ENCODE measurements at regions of chr14 and their contacts with region 1.

Region 1: GRCh38 chr14:102694530-102695166 is 82.6 kb upstream of the TRAF3 start:
- DNase-seq: peak; percentile 78
- H3K4me3 ChIP-seq: no peak overlapping the region
- H3K27ac ChIP-seq: no peak overlapping the region
- H3K4me1 ChIP-seq: peaks cover 4% of the 10 kb centered on the region
- CTCF ChIP-seq: peak; percentile 87

Region 2: DNA sequence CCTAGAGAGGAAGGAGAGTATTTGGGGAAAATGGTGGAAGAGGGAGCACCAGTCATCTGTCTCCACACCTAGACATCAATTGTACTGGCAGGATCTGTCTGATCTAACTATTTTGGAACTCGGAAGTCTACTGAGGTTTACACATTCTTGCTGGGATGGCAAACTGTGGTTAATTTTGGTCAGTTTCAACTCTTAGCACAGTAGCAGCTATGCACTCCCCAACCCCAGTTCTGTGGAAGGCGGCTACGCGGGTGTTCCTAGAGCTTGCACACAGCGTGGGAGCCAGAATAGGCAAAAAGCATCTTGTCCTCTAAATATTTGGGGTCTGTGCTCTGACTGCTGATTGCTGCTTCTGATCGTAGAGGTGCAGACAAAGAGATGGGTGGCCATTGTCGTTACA is 298.1 kb before region 1 on chr14:
- CTCF ChIA-PET with region 1: no interaction called
- POLR2A ChIA-PET with region 1: no interaction called
- intact Hi-C with region 1: no loop called
- DNase-seq: no peak
- H3K4me3 ChIP-seq: no peak overlapping the region
- H3K27ac ChIP-seq: no peak overlapping the region
- H3K4me1 ChIP-seq: no peaks in the 10 kb centered on the region
- CTCF ChIP-seq: no peak

Region 3: DNA sequence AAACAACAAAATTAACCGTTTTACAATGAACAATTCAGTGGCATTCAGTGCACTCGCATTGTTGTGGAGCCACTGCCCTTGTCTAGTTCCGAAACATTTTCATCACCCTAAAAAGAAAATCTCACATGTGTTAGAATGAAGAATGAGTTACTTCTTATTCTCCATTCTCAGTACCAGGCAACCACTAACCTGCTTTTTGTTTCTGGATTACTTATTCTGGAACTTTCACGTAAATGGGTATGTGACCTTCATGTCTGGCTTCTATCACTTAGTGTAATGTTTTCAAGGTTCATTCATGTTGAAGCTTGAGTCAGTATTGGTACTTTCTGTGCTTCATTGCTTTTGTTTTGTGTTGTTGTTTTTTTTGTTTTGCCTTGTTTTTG is 86.6 kb before region 1 on chr14:
- CTCF ChIA-PET with region 1: no interaction called
- POLR2A ChIA-PET with region 1: no interaction called
- intact Hi-C with region 1: no loop called
- DNase-seq: no peak
- H3K4me3 ChIP-seq: peak overlapping the region; percentile 6
- H3K27ac ChIP-seq: peak overlapping the region; percentile 33
- H3K4me1 ChIP-seq: peaks cover 71% of the 10 kb centered on the region
- CTCF ChIP-seq: no peak

Region 4: DNA sequence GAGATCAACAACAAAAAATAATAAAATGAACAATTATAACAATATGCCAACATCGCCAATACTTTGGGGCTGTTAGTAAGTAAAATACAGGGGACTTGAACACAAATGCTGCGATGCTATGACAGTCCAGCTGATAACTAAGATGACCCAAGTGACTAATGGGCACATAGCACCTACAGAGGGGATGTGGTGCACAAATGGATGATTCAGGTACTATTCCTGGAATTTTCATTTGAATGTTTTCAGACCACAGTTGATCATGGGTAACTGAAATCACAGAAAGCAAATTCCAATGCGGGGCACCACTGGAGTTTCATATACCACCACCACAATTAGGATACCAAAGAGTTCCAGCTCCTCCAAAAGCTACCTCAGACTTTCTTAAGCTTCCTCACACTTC is 19.3 kb before region 1 on chr14:
- CTCF ChIA-PET with region 1: no interaction called
- POLR2A ChIA-PET with region 1: no interaction called
- intact Hi-C with region 1: no loop called
- DNase-seq: no peak
- H3K4me3 ChIP-seq: no peak overlapping the region
- H3K27ac ChIP-seq: no peak overlapping the region
- H3K4me1 ChIP-seq: no peaks in the 10 kb centered on the region
- CTCF ChIP-seq: no peak

Region 5: DNA sequence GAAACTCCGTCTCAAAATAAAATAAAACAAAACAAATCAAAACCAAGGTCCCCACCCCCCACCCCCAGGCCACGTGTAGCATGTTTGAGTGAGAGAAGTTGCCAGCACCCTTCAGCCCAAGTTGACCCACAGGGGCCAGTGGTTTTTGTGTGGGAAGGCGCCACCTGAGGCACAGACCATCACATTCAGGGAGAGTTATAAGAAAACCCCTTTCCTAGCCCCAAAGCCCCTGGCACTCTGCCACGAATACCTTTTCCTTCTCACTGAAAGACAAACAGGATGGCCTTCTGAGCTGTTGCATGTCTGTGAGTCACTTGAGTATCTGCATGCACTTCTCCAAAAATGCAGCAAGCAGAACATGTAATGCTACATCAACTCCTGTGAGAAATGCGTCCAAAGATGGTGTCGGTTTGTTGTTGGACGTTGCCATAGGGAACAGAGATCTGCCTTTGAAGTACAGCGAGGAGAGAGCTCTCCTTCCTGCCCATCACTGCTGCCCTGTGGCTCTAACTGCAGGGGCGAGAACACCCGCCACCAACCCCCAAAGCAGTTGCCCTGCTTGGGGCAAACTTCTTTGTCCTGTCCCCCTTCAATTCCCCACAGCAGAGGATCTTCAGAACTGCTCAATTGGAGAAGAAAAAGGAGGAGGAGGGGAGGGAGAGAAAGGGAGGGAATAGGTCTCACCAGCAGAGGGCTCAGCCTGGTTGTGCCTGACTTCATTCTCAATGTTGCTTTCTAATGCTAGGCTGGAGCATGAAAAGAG is 79.9 kb after region 1 on chr14:
- CTCF ChIA-PET with region 1: no interaction called
- POLR2A ChIA-PET with region 1: no interaction called
- intact Hi-C with region 1: loop called (anchors 5 kb)
- DNase-seq: peak; percentile 67
- H3K4me3 ChIP-seq: no peak overlapping the region
- H3K27ac ChIP-seq: no peak overlapping the region
- H3K4me1 ChIP-seq: peaks cover 12% of the 10 kb centered on the region
- CTCF ChIP-seq: peak; percentile 84

Region 6: DNA sequence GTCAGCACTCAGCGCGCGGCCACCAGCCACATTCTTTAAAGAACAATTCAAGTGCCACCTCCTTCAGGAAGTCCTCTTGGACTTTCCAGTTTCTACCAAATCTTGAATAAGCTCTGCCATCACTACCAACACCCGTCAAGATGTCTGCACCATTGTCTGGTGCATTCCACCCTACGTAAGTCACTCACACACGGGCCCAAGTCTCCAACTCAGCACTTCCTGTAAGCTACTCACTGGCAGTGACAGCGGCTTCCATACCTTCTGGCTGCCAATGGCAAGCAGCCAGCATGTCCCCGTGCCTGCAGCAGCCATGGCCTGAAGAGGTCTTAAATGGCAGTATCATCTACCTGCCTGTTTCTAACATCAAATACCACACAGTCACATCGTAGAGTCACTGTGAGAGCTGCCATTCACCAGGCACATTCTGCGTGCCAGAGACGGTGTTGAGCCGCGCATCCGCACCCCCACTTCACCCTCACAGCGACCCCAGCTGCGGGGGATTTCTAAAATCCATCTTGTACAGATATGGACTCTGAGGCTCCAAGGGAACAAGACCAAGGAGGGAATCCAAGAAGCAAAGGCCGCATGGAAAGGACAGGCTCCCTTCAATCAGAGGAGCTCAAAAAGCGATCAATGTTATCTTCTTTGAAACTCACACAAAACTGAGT is 314.4 kb after region 1 on chr14:
- CTCF ChIA-PET with region 1: no interaction called
- POLR2A ChIA-PET with region 1: no interaction called
- intact Hi-C with region 1: loop called (anchors 10 kb)
- DNase-seq: no peak
- H3K4me3 ChIP-seq: no peak overlapping the region
- H3K27ac ChIP-seq: no peak overlapping the region
- H3K4me1 ChIP-seq: no peaks in the 10 kb centered on the region
- CTCF ChIP-seq: no peak

Measured in OCI-LY7 (cell line).